Ascending aorta (tissue), 2 donors: ENCODE measurements at regions of chr1 and their contacts with region 1.

Region 1: DNA sequence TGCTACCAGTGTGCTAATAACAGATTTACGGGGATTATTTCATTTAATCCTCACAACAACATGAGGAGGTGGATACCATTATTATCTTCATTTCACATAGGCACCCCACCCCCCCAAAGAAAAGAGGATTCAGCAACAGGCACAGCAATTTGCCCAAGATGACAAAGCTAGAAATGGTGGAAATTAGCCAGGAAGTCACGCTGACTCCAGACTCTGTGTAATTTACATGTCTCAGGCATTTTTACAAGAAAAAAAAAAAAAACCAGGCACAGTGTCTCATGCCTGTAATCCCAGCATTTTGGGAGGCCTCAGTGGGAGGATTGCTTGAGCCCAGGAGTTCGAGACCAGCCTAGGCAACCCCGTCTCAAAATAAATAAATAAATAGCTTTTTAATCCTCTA is 37.5 kb upstream of the PRDM2 start:
- DNase-seq: peak in 1 of 2 donors; percentile 65
- H3K4me3 ChIP-seq: no peak overlapping the region
- H3K27ac ChIP-seq: no peak overlapping the region
- H3K4me1 ChIP-seq: no peaks in the 10 kb centered on the region
- H3K27me3 ChIP-seq: no peaks in the 10 kb centered on the region
- CTCF ChIP-seq: no peak

Region 2: GRCh38 chr1:13619909-13620308 is 42.6 kb before region 1 on chr1:
- intact Hi-C with region 1: no loop called
- DNase-seq: no peak
- H3K4me3 ChIP-seq: no peak overlapping the region
- H3K27ac ChIP-seq: peak overlapping the region in 1 of 2 donors; percentile 50
- H3K4me1 ChIP-seq: no peaks in the 10 kb centered on the region
- H3K27me3 ChIP-seq: no peaks in the 10 kb centered on the region
- CTCF ChIP-seq: no peak

Region 3: GRCh38 chr1:13960375-13960987 is 298.0 kb after region 1 on chr1:
- intact Hi-C with region 1: loop called (anchors 1 kb)
- DNase-seq: peak in 1 of 2 donors; percentile 73
- H3K4me3 ChIP-seq: no peak overlapping the region
- H3K27ac ChIP-seq: no peak overlapping the region
- H3K4me1 ChIP-seq: no peaks in the 10 kb centered on the region
- H3K27me3 ChIP-seq: no peaks in the 10 kb centered on the region
- CTCF ChIP-seq: peak; percentile 89 to 98 (median 96)

Region 4: GRCh38 chr1:14590781-14591180 is 928.3 kb after region 1 on chr1:
- intact Hi-C with region 1: no loop called
- DNase-seq: no peak
- H3K4me3 ChIP-seq: no peak overlapping the region
- H3K27ac ChIP-seq: no peak overlapping the region
- H3K4me1 ChIP-seq: no peaks in the 10 kb centered on the region
- H3K27me3 ChIP-seq: no peaks in the 10 kb centered on the region
- CTCF ChIP-seq: no peak